ENCODE measurements at regions of chr12 and their contacts with region 1.

Region 1: GRCh38 chr12:5988659-5989116 is 43.6 kb upstream of the ANO2 start:
- DNase-seq: peak; percentile 83 to 92
- ATAC-seq: peak; percentile 89
- H3K4me3 ChIP-seq: no peak overlapping the region
- H3K27ac ChIP-seq: no peak overlapping the region
- H3K4me1 ChIP-seq: no peaks in the 10 kb centered on the region
- H3K27me3 ChIP-seq: no peaks in the 10 kb centered on the region

Region 2: GRCh38 chr12:6026998-6027397 is 38.3 kb after region 1 on chr12:
- intact Hi-C with region 1: no loop called
- DNase-seq: no peak
- ATAC-seq: no peak
- H3K4me3 ChIP-seq: no peak overlapping the region
- H3K27ac ChIP-seq: no peak overlapping the region
- H3K4me1 ChIP-seq: no peaks in the 10 kb centered on the region
- H3K27me3 ChIP-seq: no peaks in the 10 kb centered on the region

Region 3: DNA sequence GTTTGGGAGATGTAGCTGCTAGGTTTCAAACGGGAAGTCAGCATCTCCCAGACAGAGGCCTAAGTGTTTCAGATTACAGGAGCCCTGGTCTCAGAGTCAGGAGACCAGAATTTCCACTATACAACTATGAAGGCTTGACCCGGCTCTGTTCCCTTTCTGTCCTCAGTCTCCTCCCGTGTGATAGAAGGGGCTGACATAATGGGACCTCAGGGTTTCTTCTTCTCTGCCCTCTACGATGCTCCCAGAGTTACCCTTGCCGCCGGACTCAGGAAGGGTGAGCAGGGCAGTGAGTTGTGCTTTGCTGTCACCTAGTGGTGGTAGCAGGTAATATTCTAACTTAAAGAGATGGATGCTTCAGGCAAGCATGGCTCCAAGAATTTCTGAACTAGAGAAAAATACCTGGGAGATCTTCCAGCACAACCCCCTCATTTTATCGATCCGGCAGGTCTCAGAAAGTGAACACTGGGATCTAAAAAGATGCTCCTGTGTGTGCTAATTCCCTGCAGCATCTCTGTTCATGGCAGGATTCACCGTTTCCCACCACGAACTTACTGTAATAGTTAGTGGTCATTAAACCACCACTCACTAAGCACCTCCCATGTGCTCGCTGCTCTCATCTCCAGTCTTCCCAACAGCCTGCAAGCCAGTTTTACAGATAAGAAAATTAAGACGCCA is 51.3 kb after region 1 on chr12:
- intact Hi-C with region 1: loop called (anchors 1 to 2 kb)
- DNase-seq: peak in 1 of 2 donors; percentile 76
- ATAC-seq: peak; percentile 87
- H3K4me3 ChIP-seq: no peak overlapping the region
- H3K27ac ChIP-seq: no peak overlapping the region
- H3K4me1 ChIP-seq: no peaks in the 10 kb centered on the region
- H3K27me3 ChIP-seq: no peaks in the 10 kb centered on the region

Region 4: DNA sequence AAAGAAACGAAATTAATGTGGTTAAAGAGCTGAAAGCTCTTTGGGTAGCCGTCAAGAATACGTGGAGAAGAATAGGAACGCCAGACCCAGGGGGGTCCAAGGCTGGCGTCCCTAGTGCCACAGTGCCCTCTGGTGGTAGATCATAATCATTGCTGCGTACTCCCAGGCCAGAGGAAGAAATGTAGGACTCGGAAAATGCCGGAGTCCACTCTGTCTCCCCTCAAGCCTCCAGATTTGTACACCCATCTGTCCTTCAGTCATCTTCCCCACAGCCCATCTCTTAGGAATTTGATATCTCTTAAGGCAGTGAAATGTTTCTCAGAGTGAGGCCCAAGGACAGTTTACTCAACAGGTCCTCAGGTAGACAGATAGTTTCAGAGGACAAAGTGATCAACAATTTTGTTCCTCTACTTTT is 296.4 kb after region 1 on chr12:
- intact Hi-C with region 1: loop called (anchors 1 to 2 kb)
- DNase-seq: peak in 1 of 2 donors; percentile 78
- ATAC-seq: peak; percentile 90
- H3K4me3 ChIP-seq: no peak overlapping the region
- H3K27ac ChIP-seq: no peak overlapping the region
- H3K4me1 ChIP-seq: no peaks in the 10 kb centered on the region
- H3K27me3 ChIP-seq: no peaks in the 10 kb centered on the region

Measured in aorta (tissue), 5 donors.